ENCODE measurements at regions of chr5 and their contacts with region 1.

Region 1: DNA sequence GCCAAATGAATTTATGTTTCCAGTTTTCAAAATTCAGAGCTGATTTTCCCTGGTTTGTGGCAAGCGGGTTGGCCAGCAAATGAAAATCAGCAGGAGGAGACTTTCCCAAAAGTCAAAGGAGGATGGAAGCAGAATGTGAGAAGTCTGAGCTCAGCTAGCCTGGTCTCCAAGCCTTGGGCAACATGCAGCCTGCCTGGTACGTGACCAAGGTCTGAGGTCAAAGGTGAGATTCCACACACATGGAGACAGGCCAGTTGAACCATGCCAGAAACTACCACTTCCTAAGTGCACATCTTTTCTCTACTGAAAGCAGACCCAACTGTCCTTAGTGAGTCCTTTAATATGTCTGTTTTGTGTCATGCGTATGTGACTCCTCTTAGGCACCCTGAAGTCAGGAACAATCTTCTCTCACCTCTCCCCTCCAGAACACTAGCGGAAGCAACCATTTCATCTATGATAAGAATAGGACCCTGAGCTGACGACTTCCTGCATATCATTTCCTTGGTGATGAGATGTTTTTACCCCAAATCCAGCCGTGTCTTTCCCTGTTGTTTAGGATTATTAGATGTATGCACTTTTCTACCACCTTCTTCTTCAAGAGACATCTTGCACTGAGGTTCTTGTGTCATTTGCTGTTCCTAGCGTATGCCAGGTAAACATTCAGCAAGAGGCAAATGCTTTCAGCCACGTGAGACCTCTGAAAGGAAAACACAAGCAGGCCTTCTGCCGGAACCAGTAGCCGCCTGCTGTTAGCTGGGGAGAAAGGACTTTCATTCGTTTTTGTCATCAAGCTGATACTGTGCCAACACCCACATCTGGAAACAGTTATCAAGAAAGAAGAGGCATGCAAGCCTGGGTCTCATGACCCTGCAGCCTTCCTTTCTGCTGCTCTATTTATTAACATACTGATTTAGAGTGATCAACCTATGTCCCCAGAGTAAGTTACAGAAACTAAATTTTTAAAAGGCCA is 9.7 kb upstream of the TGFBI start:
- DNase-seq: no peak
- ATAC-seq: no peak
- H3K4me3 ChIP-seq: no peak overlapping the region
- H3K27ac ChIP-seq: peak overlapping the region in 1 of 2 donors; percentile 65
- H3K4me1 ChIP-seq: peaks cover 5 to 21% of the 10 kb centered on the region in 2 donors
- H3K27me3 ChIP-seq: no peaks in the 10 kb centered on the region

Region 2: DNA sequence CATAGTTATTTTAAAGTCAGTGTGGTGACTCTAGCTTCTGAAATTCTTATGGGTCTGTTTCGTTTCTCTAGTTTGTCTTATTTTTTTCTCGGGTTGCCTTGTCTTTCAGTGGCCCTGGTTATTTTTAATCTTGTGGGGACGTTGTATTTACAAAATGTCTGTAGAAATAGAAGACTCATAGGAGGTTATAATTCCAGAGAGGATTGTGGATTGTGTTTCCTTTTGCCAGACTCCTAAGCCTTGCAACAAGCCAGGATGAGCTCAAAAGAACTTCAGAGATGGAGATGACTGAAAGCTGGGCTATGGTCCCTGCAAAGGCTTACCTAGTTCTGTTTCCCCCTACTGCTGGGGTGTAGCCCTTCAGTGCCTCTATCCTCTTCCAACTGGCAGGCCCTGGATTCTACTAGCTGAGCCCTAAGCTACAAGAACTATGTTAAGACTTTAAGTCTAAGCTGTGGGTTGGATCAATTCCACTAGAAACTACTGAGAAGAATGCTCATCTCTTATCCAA is 32.2 kb before region 1 on chr5:
- intact Hi-C with region 1: loop called in 1 of 2 experiments (anchors 2 kb)
- DNase-seq: peak in 1 of 2 donors; percentile 9
- ATAC-seq: peak; percentile 60
- H3K4me3 ChIP-seq: no peak overlapping the region
- H3K27ac ChIP-seq: peak overlapping the region; percentile 79 to 82
- H3K4me1 ChIP-seq: peaks cover 7 to 12% of the 10 kb centered on the region in 2 donors
- H3K27me3 ChIP-seq: no peaks in the 10 kb centered on the region